ENCODE measurements at regions of chr2 and their contacts with region 1.

Region 1: GRCh38 chr2:134594399-134594798 is 124.4 kb downstream of the TMEM163 start:
- DNase-seq: no peak
- ATAC-seq: no peak
- H3K4me3 ChIP-seq: no peak overlapping the region
- H3K27ac ChIP-seq: no peak overlapping the region
- H3K4me1 ChIP-seq: no peaks in the 10 kb centered on the region
- H3K27me3 ChIP-seq: no peaks in the 10 kb centered on the region
- CTCF ChIP-seq: no peak
- POLR2A ChIP-seq: no peak
- RAD21 ChIP-seq: no peak

Region 2: GRCh38 chr2:133835821-133836619 is 758.4 kb before region 1 on chr2:
- CTCF ChIA-PET with region 1: no interaction called
- POLR2A ChIA-PET with region 1: interaction called, 10 read pairs
- dilution Hi-C with region 1: no loop called
- in situ Hi-C with region 1: no loop called
- intact Hi-C with region 1: no loop called
- DNase-seq: peak; percentile 34
- ATAC-seq: no peak
- H3K4me3 ChIP-seq: no peak overlapping the region
- H3K27ac ChIP-seq: peak overlapping the region; percentile 52; the same call in 1 of the 2 replicates
- H3K4me1 ChIP-seq: peaks cover 19% of the 10 kb centered on the region
- H3K27me3 ChIP-seq: no peaks in the 10 kb centered on the region
- CTCF ChIP-seq: no peak
- POLR2A ChIP-seq: no peak
- RAD21 ChIP-seq: no peak

Region 3: DNA sequence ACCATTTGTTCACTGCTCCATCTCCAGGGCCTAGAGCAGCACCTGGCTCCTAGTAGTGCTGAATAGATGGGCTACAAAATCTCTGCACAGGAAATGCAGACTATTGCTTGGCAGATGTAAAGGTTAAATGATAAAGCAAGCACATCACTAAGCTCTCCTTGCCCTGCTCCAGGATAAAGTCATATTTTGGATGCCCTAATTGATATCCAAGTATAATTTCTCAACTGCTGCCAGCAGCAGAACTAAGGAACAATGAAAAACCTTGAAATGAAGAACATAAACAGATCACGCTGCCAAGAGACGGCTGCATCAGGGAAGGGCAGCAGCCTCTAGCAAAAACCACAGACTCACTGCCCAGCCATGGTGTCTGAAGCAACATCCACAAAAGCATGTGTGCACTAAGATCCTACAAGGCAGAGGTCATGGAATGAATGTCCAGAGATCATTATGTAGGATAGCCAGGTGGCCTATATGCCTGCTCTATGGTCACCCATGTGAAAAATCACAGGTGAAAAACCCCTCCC is 10.3 kb before region 1 on chr2:
- CTCF ChIA-PET with region 1: interaction called, 10 read pairs
- POLR2A ChIA-PET with region 1: no interaction called
- dilution Hi-C with region 1: no loop called
- in situ Hi-C with region 1: no loop called
- intact Hi-C with region 1: no loop called
- DNase-seq: no peak
- ATAC-seq: no peak
- H3K4me3 ChIP-seq: no peak overlapping the region
- H3K27ac ChIP-seq: no peak overlapping the region
- H3K4me1 ChIP-seq: no peaks in the 10 kb centered on the region
- H3K27me3 ChIP-seq: peaks cover 1% of the 10 kb centered on the region; the same call in 1 of the 2 replicates
- CTCF ChIP-seq: no peak
- POLR2A ChIP-seq: no peak
- RAD21 ChIP-seq: no peak

Measured in IMR-90 (cell line).